HepG2 (cell line): ENCODE measurements at regions of chr21 and their contacts with region 1.

Region 1: DNA sequence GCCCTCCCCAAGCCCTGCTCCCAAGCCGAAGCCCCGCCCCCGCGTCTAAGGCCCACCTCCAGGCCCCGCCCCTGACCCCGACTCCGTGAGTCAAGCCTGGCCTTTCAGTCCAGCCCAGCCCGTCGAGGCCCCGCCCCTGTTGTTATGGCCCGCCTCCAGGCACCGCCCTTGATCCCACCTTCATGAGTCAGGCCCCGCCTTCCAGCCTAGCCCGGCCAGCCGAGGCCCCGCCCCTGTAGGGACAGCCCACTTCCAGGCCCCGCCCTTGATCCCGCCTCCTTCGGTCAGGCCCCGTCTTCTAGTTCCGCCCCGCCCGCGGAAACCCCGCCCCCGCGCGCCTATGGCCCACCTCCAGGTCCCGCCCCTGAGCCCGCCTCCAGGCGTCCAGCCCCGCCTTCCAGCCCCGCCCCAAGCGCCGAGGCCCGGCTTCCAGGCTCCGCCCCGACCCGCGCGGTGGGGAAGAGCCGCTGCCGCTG is 247 bp upstream of the DOP1B start:
- DNase-seq: peak; percentile 91
- ATAC-seq: peak; percentile 90
- H3K4me3 ChIP-seq: peak overlapping the region; percentile 85 to 91 (median 87); a peak in 5 of 6 replicates
- H3K27ac ChIP-seq: peak overlapping the region; percentile 81
- H3K4me1 ChIP-seq: peaks cover 17% of the 10 kb centered on the region
- H3K27me3 ChIP-seq: peaks cover 0 to 5% of the 10 kb centered on the region in 2 experiments; a peak in 1 of 5 replicates
- CTCF ChIP-seq: no peak
- EP300 ChIP-seq: no peak
- POLR2A ChIP-seq: peak in 1 of 2 experiments; percentile 8; a peak in 1 of 4 replicates
- RAD21 ChIP-seq: no peak

Region 2: DNA sequence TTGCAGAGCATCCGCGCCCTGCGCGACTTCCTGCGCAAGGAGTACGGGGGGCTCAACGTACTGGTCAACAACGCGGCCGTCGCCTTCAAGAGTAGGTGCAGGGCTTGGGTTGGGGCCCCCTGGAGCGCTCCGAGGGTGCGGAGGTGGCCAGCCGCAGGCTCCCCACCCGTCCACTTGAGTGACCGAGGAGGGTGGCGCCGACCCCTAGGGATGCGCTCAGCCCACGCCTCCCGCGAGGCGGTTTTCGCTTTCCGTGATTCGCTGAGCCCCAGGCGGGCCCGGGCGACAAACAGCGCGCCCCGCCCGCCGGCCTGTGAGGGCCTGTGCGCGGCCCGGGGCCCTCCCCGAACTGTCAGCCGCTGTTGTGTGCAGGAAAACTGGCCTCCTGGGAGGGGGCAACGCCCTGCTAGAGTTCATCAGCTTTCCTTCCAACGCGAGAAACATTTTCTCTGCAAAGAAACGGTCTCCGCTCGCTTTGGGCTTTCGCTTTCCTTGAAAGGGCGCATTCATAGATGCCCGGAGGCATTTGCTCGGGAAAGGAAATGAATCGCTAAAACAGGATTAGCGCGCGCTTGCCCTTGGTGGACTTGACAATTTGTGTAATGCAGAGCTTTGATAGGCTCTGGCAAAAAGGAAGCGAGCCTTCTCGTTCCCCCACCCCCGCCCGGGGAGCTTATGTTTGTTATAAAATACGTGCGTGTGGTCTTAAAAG is 20.8 kb before region 1 on chr21:
- CTCF ChIA-PET with region 1: no interaction called
- POLR2A ChIA-PET with region 1: no interaction called
- in situ Hi-C with region 1: no loop called
- intact Hi-C with region 1: no loop called
- DNase-seq: no peak
- ATAC-seq: peak; percentile 78
- H3K4me3 ChIP-seq: peak overlapping the region; percentile 44 to 66 (median 54); a peak in 5 of 6 replicates
- H3K27ac ChIP-seq: no peak overlapping the region
- H3K4me1 ChIP-seq: peaks cover 20% of the 10 kb centered on the region
- H3K27me3 ChIP-seq: peaks cover 6 to 43% of the 10 kb centered on the region in 2 experiments
- CTCF ChIP-seq: no peak
- EP300 ChIP-seq: no peak
- POLR2A ChIP-seq: no peak
- RAD21 ChIP-seq: no peak

Region 3: DNA sequence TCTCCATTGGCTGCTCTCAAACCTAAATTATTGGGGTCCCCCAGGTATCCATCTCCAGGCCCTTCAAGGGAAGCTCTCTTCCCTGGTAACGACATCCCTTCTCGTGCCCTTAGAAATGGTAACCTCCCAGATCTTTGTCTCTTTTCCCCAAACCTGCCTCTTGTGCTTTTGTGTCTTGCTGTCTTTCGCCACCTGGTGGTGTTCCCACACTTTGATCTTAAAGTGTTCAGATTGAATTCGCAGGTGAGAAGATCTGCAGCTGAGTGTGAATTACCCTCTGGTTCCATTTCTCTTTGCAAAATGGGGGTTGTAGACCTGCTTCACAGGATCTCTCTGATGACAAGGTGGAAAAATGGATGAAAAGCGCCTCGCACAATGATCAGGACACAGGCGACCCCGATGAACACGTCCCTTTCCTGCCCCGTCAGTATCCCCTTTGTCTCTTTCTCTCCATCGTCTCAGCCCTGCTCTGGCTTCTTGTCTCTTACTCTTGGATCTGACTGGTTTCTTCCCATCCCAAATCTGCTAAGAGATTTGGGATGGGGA is 53.3 kb after region 1 on chr21:
- CTCF ChIA-PET with region 1: interaction called, 20 read pairs
- POLR2A ChIA-PET with region 1: interaction called, 6 read pairs
- in situ Hi-C with region 1: loop called (anchors 5 kb)
- intact Hi-C with region 1: loop called (anchors 1 kb)
- DNase-seq: peak; percentile 71
- ATAC-seq: peak; percentile 70
- H3K4me3 ChIP-seq: no peak overlapping the region
- H3K27ac ChIP-seq: no peak overlapping the region
- H3K4me1 ChIP-seq: peaks cover 7% of the 10 kb centered on the region; the same call in 1 of the 2 replicates
- H3K27me3 ChIP-seq: no peaks in the 10 kb centered on the region
- CTCF ChIP-seq: peak; percentile 82
- EP300 ChIP-seq: no peak
- POLR2A ChIP-seq: no peak
- RAD21 ChIP-seq: peak; percentile 73

Region 4: DNA sequence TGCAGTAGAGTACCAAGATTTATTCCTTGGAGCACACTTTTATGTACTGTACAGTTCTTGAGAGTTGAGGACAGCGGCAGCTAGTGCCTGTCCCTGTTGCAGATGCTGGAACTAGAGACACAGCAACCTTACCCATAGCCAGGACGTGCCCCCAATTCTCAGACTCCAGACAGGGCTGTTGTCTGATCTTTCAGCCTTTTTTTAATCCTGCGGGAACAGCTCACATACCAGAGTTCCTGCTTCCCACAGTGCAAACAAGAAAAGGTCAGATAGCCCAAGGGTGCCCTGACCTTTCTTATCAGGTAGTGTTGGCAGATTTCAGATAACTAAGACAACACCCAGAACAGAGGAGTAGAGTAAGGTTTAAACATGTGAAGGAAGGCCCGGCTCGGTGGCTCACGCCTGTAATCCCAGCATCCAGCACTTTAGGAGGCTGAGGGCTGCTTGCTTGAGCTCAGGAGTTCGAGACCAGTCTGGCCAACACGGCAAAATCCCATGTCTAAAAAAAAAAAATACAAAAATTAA is 78.7 kb after region 1 on chr21:
- CTCF ChIA-PET with region 1: no interaction called
- POLR2A ChIA-PET with region 1: no interaction called
- in situ Hi-C with region 1: no loop called
- intact Hi-C with region 1: loop called (anchors 2 kb)
- DNase-seq: peak; percentile 95
- ATAC-seq: peak; percentile 94
- H3K4me3 ChIP-seq: peak overlapping the region in 1 of 3 experiments; percentile 13; a peak in 1 of 6 replicates
- H3K27ac ChIP-seq: no peak overlapping the region
- H3K4me1 ChIP-seq: peaks cover 27% of the 10 kb centered on the region
- H3K27me3 ChIP-seq: no peaks in the 10 kb centered on the region
- CTCF ChIP-seq: 0 out of 2 replicates have a peak, but pooled peaks have one; percentile 3
- EP300 ChIP-seq: peak in 1 of 2 experiments; percentile 93; a peak in 2 of 4 replicates
- POLR2A ChIP-seq: no peak
- RAD21 ChIP-seq: no peak

Region 5: GRCh38 chr21:36330904-36331303 is 174.5 kb after region 1 on chr21:
- CTCF ChIA-PET with region 1: interaction called, 4 read pairs
- POLR2A ChIA-PET with region 1: no interaction called
- in situ Hi-C with region 1: loop called (anchors 5 kb)
- intact Hi-C with region 1: loop called (anchors 1 kb)
- DNase-seq: peak; percentile 51
- ATAC-seq: peak; percentile 94
- H3K4me3 ChIP-seq: no peak overlapping the region
- H3K27ac ChIP-seq: no peak overlapping the region
- H3K4me1 ChIP-seq: peaks cover 24% of the 10 kb centered on the region
- H3K27me3 ChIP-seq: no peaks in the 10 kb centered on the region
- CTCF ChIP-seq: peak; percentile 70
- EP300 ChIP-seq: no peak
- POLR2A ChIP-seq: no peak
- RAD21 ChIP-seq: peak; percentile 47

Region 6: GRCh38 chr21:36385233-36386030 is 229.1 kb after region 1 on chr21 and contains the start of gene CHAF1B:
- CTCF ChIA-PET with region 1: no interaction called
- POLR2A ChIA-PET with region 1: no interaction called
- in situ Hi-C with region 1: no loop called
- intact Hi-C with region 1: loop called (anchors 5 kb)
- DNase-seq: peak; percentile 64
- ATAC-seq: peak; percentile 88
- H3K4me3 ChIP-seq: peak within 1 kb of the TSS; percentile 67 to 82 (median 75)
- H3K27ac ChIP-seq: peak within 1 kb of the TSS; percentile 42
- H3K4me1 ChIP-seq: peaks cover 47% of the 10 kb centered on the region
- H3K27me3 ChIP-seq: no peaks in the 10 kb centered on the region
- CTCF ChIP-seq: no peak
- EP300 ChIP-seq: no peak
- POLR2A ChIP-seq: peak; percentile 68 to 78
- RAD21 ChIP-seq: 0 out of 2 replicates have a peak, but pooled peaks have one; percentile 14
- total RNA-seq, gene CHAF1B: 14.1 and 18.5 TPM in 2 replicates